OCI-LY7 (cell line): ENCODE measurements at regions of chr3 and their contacts with region 1.

Region 1: DNA sequence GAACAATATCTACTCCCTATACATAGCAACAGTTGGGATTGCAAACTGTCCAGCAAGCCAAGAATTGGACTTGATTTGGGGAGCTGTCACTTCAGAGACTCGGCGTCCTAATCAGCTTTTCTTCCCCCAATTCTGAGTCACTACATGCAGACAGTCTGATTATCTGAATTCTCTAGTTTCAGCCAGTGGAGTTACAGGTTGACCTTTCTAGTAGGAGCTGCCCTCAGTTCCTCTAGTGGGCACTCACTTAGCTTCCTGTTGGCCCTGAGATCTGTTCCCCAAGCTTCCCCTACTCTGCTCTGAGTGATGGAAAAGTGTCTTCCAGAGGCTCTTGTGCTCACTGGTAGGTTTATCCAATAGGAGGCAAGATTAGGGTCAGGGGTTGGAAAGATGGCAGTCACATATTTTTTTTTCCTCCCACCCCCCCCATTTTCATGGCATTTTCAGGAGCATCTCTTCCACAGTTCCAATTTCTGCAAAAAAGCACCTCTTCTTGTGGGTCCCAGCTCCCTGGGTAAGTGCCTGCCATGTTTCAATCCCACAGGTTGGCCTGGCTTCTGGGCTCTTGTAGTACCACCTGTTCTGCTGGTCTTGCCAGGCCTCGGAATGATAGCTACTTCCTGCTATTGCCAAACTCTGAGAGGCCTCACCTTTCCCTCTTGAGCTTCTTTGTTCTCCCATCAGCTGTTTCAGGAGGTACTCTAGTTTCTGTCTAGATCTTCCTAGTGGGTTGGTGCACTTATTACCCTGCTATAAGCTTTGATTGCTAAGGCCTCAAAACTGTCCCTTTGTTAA is 182.2 kb downstream of the RAP2B start:
- DNase-seq: no peak
- H3K4me3 ChIP-seq: no peak overlapping the region
- H3K27ac ChIP-seq: no peak overlapping the region
- H3K4me1 ChIP-seq: no peaks in the 10 kb centered on the region
- CTCF ChIP-seq: no peak

Region 2: DNA sequence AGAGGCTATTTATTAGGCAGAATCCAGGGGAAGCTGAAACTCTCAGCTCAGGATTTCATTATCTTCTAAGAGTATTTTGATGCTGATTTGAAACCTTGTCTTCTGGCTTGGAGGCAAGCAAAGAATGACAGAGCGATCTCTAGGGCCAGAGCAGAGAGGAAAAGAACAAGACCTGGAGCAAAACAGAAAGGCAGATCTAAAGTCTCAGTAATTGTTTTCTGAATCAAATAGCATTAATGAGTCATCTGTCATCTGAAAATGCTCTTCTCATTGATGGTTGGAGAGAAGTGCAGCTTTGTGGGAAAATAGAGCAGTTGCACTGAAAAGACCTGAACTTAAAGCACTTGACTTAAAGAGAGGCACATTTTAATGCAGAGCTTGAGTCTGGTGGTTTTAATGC is 203.8 kb after region 1 on chr3:
- CTCF ChIA-PET with region 1: no interaction called
- POLR2A ChIA-PET with region 1: interaction called, 10 read pairs
- intact Hi-C with region 1: no loop called
- DNase-seq: no peak
- H3K4me3 ChIP-seq: no peak overlapping the region
- H3K27ac ChIP-seq: no peak overlapping the region
- H3K4me1 ChIP-seq: no peaks in the 10 kb centered on the region
- CTCF ChIP-seq: no peak